Endothelial cell of umbilical vein (primary cell): ENCODE measurements at regions of chr6 and their contacts with region 1.

Region 1: DNA sequence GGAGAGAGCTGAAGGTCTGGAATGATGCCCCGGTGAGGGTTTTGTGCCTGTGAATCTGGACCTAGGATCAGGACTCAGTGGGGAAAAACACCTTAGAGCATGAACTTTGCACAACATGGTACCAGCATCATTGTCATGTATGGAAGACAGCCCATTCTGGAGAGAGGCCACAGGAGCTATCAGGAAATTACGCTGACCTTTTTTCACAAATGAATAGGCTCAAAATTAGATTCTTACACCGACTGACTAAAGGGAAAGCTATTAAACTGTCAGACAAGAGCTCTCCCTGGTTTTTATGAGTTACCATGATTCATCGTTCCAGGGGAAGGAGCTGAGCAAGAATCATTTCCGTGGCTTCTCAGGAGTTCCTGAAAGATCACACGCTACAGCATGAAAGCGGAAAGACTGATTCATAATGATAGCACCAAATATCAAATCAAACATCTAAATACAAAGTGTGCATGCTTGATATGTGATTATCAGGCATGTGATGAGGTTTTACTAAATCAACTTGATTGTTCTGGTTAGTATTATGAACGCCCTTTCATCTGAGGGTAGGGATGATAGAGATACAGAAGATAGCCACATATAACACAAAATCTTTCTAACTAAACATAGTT is 224.9 kb upstream of the SMLR1 start:
- DNase-seq: peak; percentile 98
- H3K4me3 ChIP-seq: no peak overlapping the region
- H3K27ac ChIP-seq: peak overlapping the region; percentile 99
- H3K4me1 ChIP-seq: peaks cover 29% of the 10 kb centered on the region
- H3K27me3 ChIP-seq: no peaks in the 10 kb centered on the region
- CTCF ChIP-seq: no peak
- POLR2A ChIP-seq: peak; percentile 50

Region 2: DNA sequence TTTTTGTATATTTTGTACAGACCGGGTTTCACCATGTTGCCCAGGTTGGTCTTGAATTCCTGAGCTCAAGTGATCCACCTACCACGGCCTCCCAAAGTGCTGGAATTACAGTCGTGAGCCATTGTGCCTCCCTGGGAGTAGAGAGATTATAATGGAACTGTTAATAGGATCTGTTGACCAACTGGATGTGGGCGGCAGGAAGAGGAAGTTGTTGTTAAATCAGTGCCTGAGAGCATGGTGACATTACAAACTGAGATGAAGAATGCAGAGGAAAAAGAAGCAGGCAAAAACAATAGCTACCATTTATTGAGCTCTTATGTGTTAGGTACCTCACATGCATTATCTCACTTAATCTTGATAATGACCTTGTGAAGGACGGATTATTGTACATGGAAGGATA is 593.1 kb before region 1 on chr6:
- CTCF ChIA-PET with region 1: no interaction called
- POLR2A ChIA-PET with region 1: no interaction called
- dilution Hi-C with region 1: no loop called
- intact Hi-C with region 1: loop called (anchors 5 kb)
- DNase-seq: peak; percentile 46
- H3K4me3 ChIP-seq: no peak overlapping the region
- H3K27ac ChIP-seq: peak overlapping the region; percentile 94
- H3K4me1 ChIP-seq: peaks cover 28% of the 10 kb centered on the region
- H3K27me3 ChIP-seq: no peaks in the 10 kb centered on the region
- CTCF ChIP-seq: no peak
- POLR2A ChIP-seq: peak; percentile 10

Region 3: GRCh38 chr6:130129762-130130246 is 472.5 kb before region 1 on chr6:
- CTCF ChIA-PET with region 1: no interaction called
- POLR2A ChIA-PET with region 1: no interaction called
- dilution Hi-C with region 1: no loop called
- intact Hi-C with region 1: loop called (anchors 1 kb)
- DNase-seq: peak; percentile 80
- H3K4me3 ChIP-seq: peak overlapping the region in 1 of 3 experiments; percentile 39
- H3K27ac ChIP-seq: peak overlapping the region; percentile 81
- H3K4me1 ChIP-seq: peaks cover 34% of the 10 kb centered on the region
- H3K27me3 ChIP-seq: no peaks in the 10 kb centered on the region
- CTCF ChIP-seq: no peak
- POLR2A ChIP-seq: no peak

Region 4: DNA sequence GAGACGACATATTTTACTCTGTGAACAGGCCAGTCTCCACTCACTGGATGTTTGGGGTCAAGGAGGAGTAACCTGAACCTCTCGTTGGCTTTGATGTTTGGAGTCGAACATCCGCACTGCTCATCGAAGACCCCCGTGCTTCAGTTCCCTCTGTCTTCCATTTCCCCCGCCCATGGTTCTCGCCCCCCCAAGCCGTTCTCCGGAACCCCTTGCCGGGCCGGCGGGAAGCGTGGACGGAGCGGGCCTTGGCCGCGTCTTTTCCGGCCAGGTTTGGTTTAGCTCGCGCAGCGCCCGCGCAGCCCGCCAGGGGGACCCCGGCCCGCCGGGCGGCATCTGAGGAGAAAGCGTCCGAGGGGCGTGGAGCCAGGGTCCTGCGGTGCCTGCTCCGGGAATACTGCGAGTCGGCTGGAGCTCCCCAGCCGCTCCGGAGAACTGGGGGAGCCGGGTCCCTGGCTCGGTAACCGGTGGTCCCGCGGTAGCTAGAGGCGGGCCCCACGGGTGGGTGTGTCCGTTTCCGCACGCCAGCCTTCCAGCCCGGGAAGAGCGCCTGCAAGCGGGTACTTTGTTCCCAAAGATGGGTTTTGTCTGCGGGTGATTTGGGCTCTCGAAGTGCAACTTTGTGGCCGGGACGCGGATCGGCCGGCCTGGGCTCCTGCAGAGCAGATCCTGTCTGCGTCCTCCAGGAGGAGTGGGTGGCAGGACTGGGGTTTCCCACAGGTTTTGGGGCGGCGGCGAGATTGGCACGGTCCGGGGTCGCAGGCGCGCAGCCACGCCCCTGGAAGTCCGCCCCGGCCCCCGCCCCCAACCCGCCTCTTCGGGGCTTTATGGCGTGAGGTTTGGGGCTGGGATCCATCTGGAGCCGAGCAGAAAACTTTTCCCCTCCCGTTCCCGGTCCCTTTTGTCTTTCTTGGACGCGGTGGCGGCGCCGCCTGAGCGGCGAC is 236.8 kb before region 1 on chr6 and contains the start of gene TMEM200A:
- CTCF ChIA-PET with region 1: interaction called, 12 read pairs
- POLR2A ChIA-PET with region 1: no interaction called
- dilution Hi-C with region 1: no loop called
- intact Hi-C with region 1: loop called (anchors 1 kb)
- DNase-seq: peak; percentile 38
- H3K4me3 ChIP-seq: peak within 1 kb of the TSS; percentile 43 to 72 (median 66)
- H3K27ac ChIP-seq: no peak within 1 kb of the TSS
- H3K4me1 ChIP-seq: peaks cover 6% of the 10 kb centered on the region
- H3K27me3 ChIP-seq: peaks cover 22 to 34% of the 10 kb centered on the region in 2 experiments
- CTCF ChIP-seq: peak; percentile 80 to 94
- POLR2A ChIP-seq: no peak
- total RNA-seq, gene TMEM200A: 0.74 and 0.75 TPM in 2 replicates

Region 5: DNA sequence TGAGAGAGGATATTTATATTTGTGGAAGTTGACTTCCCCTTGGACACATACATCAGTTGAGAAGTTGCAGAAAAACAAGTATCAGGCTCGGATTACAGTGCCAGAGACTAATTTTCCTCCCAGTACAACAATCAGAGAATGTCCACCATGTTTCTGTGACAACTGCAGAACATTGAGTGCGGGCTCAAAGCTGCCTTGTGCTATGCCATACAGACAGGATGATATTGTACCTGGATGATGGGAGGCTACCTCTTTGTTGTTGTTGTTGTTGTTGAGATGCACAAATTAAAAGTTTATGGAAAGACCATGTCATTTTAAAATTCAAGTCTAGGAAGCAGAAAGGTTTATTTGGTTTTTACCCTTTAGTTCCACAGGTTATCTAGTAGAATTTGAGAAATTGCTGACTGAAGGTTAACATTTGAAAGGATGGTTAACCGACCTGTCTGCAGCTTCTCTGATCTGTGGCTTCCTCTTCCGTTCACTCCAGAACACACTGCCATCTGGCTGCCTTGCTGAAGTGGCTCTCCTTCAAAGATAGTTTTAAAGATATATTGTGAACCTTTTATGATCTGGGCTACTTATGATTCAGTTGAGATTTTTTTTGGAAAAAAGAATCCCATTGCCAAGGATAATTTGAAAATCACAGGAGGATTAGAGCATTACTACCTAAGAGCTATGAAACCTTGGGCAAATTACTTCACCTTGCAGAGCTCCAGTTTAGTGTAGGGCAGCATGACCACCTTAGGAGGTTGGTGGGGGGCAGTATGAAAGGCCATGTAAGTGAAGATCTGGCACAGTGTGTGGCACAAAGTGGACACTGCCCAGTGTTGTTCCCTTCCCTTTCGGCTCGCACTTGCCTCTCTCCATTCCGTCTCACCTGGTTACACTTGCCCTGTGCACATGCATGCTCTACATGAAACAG is 220.5 kb before region 1 on chr6:
- CTCF ChIA-PET with region 1: no interaction called
- POLR2A ChIA-PET with region 1: no interaction called
- dilution Hi-C with region 1: no loop called
- intact Hi-C with region 1: no loop called
- DNase-seq: no peak
- H3K4me3 ChIP-seq: no peak overlapping the region
- H3K27ac ChIP-seq: no peak overlapping the region
- H3K4me1 ChIP-seq: no peaks in the 10 kb centered on the region
- H3K27me3 ChIP-seq: no peaks in the 10 kb centered on the region
- CTCF ChIP-seq: no peak
- POLR2A ChIP-seq: no peak

Region 6: DNA sequence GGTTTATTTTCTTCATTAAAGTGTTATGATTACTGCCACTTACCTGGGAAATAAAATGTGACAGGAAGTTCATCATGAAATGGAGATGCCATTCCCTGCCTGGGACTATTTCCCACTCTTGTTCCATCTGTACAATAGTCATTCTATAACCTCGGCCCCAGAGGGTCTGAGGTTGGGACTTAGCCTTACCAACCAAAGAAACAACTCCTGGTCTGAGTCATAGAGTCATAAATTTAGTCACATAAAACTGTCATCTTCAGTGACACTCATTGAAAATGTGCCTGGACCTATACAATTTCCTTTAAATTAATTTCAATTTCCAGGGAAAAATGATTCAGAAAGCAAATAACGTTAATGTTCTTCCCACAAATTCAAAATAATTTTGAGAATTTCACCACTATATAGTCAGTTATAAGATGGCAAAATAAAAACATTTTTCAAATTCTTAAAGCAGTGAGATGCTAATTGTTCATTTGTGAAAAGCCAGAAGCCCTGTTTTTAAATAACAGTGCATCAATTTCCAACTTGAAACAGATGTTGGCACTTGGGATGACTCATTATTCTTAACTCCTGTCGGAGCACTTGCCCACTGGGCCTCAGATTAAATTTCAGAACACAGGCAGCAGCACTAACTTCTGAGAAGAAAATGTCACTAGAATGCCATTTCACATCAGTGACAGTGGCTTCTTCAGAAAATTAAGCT is 23.7 kb after region 1 on chr6:
- CTCF ChIA-PET with region 1: interaction called, 6 read pairs
- POLR2A ChIA-PET with region 1: no interaction called
- dilution Hi-C with region 1: no loop called
- intact Hi-C with region 1: loop called (anchors 1 kb)
- DNase-seq: peak; percentile 68
- H3K4me3 ChIP-seq: no peak overlapping the region
- H3K27ac ChIP-seq: no peak overlapping the region
- H3K4me1 ChIP-seq: no peaks in the 10 kb centered on the region
- H3K27me3 ChIP-seq: no peaks in the 10 kb centered on the region
- CTCF ChIP-seq: no peak
- POLR2A ChIP-seq: no peak

Region 7: DNA sequence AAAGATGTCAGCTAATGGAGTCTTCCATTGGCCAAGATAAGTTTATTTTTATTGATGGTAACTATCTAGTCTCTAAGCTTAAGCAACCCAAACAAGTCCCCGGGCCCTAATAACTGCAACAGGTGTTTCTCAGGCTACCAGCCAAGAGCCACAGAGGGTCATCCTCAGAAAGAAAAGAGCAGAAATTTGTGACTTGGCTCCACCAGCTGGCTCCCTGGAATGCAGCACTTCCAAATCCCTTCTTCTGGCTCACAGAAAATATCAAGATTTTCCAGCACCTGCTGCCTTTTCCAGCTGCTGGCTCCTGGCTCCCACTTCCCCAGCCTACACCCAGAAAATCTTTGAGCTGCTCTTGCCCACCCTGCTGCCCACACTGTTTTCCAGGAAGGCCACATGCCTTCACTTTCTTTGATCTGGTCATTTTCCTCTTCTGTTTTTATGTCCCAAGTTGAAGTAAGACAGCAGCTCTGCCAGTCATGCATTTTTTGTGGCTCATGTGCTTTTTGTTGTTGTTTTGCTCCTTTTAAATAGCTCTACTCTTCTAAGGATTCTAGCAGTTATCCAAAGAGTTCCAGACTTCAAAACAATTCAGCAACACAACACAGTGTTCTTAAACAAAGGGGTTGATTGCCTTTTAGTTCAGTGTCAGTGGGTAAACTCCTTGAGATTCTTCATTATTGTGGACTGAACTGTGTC is 74.0 kb after region 1 on chr6:
- CTCF ChIA-PET with region 1: no interaction called
- POLR2A ChIA-PET with region 1: interaction called, 4 read pairs
- dilution Hi-C with region 1: no loop called
- intact Hi-C with region 1: loop called (anchors 1 kb)
- DNase-seq: no peak
- H3K4me3 ChIP-seq: no peak overlapping the region
- H3K27ac ChIP-seq: no peak overlapping the region
- H3K4me1 ChIP-seq: peaks cover 12% of the 10 kb centered on the region
- H3K27me3 ChIP-seq: no peaks in the 10 kb centered on the region
- CTCF ChIP-seq: no peak
- POLR2A ChIP-seq: no peak